BJ (cell line): ENCODE measurements at regions of chr9 and their contacts with region 1.

Region 1: DNA sequence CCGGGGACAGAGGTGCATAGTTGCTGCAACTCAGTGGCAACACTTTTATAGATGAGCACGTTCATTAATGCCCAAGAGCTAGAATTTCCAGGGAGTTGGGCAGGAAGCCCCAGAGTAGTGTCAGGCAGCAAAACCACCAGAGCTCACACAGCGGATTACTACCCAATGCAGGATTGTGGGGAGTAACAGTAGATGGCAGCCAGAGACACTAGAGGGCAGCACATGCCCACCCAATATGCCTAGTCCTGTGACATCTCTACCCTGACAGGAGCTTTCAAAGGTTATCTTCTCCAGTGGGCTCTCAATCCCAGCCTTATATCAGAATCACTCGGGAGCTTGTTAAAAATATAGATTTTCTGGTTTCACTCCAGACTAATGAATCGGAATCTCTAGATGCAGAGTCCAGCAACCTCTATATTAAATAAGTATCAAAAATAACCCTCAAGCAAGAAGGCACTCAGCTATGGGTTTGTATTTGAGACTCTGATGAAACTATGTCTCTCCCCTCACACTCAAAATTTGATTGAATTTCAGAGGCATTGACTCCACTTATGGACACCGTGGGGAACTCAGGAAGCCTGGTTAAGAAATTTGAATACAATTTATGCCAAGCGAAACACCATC is 58.4 kb upstream of the PHF24 start:
- DNase-seq: peak; percentile 11
- H3K4me3 ChIP-seq: no peak overlapping the region
- H3K27me3 ChIP-seq: peaks cover 7% of the 10 kb centered on the region
- CTCF ChIP-seq: peak; percentile 85

Region 2: GRCh38 chr9:34948451-34948850 is 48.8 kb after region 1 on chr9:
- CTCF ChIA-PET with region 1: no interaction called
- POLR2A ChIA-PET with region 1: no interaction called
- DNase-seq: no peak
- H3K4me3 ChIP-seq: no peak overlapping the region
- H3K27me3 ChIP-seq: no peaks in the 10 kb centered on the region; the same call in 1 of the 2 replicates
- CTCF ChIP-seq: no peak

Region 3: GRCh38 chr9:34985311-34985899 is 85.8 kb after region 1 on chr9:
- CTCF ChIA-PET with region 1: interaction called, 26 read pairs
- POLR2A ChIA-PET with region 1: no interaction called
- DNase-seq: no peak
- H3K4me3 ChIP-seq: no peak overlapping the region
- H3K27me3 ChIP-seq: no peaks in the 10 kb centered on the region; the same call in none of the 2 replicates
- CTCF ChIP-seq: peak; percentile 86

Region 4: DNA sequence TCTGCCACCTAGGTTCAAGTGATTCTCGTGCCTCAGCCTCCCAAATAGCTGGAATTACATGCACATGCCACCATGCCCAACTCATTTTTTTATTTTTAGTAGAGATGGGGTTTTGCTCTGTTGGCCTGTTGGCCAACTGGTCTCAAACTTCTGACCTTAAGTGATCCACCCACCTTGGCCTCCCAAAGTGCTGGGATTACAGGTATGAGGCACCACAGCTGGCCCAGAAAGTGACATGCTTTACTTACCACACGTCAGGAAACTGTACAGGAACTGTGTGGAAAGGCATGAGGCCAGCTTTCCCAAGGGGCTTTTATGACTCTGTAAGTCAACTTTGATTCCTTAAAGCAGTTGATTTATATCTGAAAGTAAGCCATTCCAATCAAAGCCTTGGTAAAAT is 114.9 kb after region 1 on chr9:
- CTCF ChIA-PET with region 1: no interaction called
- POLR2A ChIA-PET with region 1: no interaction called
- DNase-seq: no peak
- H3K4me3 ChIP-seq: no peak overlapping the region
- H3K27me3 ChIP-seq: no peaks in the 10 kb centered on the region
- CTCF ChIP-seq: no peak

Region 5: GRCh38 chr9:35042081-35042604 is 142.5 kb after region 1 on chr9:
- CTCF ChIA-PET with region 1: interaction called, 16 read pairs
- POLR2A ChIA-PET with region 1: no interaction called
- DNase-seq: no peak
- H3K4me3 ChIP-seq: no peak overlapping the region
- H3K27me3 ChIP-seq: no peaks in the 10 kb centered on the region
- CTCF ChIP-seq: no peak

Region 6: DNA sequence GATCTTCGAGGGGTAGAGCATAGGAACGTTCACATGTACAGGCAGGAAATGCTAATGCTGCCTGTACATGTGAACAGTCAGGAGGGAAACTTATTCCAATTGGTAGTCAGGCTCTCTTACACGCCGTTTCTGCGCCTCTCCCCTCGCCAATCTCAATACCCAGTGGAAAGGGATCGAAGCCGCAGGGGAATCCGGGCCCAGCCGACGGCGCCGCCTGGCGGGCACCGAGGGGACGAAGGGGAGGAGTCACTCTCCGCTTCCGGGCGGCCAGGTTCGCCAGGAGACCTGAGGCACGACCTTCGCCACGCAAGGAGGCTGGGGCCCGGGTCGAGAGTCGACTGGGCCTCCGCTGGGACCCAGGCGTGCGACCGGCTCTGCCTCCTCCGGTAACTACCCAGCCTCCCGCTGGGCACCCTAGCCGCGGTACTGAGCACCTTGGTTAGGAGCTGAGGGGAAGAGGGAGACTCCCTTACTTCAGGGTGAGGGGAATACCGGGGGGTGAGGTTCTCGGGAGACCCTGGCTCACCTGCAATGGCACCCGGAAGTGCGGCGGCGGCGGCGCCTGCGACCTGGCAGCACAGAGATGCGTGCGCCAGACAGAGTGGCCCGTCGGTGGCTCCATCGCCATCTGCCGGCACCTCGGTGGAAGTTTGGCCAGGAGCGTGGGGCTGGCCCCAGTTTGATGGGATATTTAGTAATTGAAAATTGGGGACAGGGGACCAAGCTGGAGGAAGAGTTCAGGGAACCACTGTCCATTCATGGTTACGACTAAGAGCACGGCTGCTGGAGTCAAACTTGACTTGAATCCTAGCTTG is 196.6 kb after region 1 on chr9 and contains the start of gene PIGO:
- CTCF ChIA-PET with region 1: interaction called, 57 read pairs
- POLR2A ChIA-PET with region 1: no interaction called
- DNase-seq: no peak
- H3K4me3 ChIP-seq: peak within 1 kb of the TSS; percentile 98
- H3K27me3 ChIP-seq: no peaks in the 10 kb centered on the region
- CTCF ChIP-seq: peak; percentile 94
- polyA plus RNA-seq, gene PIGO: 18.7 and 26.9 TPM in 2 replicates

Region 7: GRCh38 chr9:35226660-35227059 is 327.0 kb after region 1 on chr9:
- CTCF ChIA-PET with region 1: no interaction called
- POLR2A ChIA-PET with region 1: no interaction called
- DNase-seq: no peak
- H3K4me3 ChIP-seq: no peak overlapping the region
- H3K27me3 ChIP-seq: no peaks in the 10 kb centered on the region
- CTCF ChIP-seq: no peak